Activated naive CD4-positive, alpha-beta T cell treated with anti-CD3 and anti-CD28 coated beads for 36 hours (primary cell): ENCODE measurements at regions of chr5 and their contacts with region 1.

Region 1: DNA sequence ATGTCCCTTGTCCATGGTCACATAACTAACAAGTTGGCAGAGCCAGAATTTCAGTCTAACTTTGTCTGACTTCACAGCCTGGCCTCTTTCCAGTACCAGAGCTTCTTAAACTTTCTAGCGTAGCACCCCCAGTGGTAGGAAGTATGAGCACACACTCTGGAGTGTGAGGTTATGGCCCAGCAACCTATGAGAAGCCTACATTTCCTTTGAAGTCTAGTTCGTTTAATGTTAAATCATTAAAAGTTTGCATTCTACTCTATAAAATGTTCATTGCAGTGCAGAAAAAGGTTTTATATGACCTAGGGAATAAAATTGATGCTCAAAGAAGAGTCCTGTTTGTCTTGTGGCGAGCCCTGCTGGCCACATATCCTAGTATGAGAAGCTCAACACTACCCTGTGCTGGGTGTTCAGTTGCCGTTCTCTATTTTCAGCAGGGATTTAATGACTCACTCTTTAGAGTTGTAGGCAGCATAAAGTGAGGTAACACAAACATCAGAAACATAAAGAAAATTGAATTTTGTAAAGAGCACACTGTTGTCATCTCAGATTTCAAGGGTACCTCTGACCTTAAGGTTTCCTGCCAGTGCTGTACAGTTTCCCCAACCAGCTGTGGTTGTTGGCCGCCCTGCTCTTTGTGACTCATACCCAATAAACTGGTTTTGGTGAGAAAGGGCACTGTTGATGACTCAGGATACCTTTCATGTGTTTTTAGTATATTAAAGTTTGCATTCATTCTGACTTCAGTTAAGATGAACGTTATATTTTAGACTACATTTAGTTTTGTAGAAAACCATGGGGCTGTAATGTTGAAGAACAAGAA is 14.3 kb downstream of the MCCC2 start:
- DNase-seq: peak; percentile 88
- H3K4me3 Mint-ChIP-seq: no peak overlapping the region
- H3K27ac Mint-ChIP-seq: peak overlapping the region; percentile 86
- H3K4me1 Mint-ChIP-seq: peaks cover 31% of the 10 kb centered on the region
- H3K27me3 Mint-ChIP-seq: no peaks in the 10 kb centered on the region

Region 2: GRCh38 chr5:71475788-71476384 is 125.5 kb before region 1 on chr5:
- CTCF ChIA-PET with region 1: no interaction called
- intact Hi-C with region 1: loop called (anchors 1 kb)
- DNase-seq: no peak
- H3K4me3 Mint-ChIP-seq: no peak overlapping the region
- H3K27ac Mint-ChIP-seq: no peak overlapping the region
- H3K4me1 Mint-ChIP-seq: peaks cover 3% of the 10 kb centered on the region
- H3K27me3 Mint-ChIP-seq: no peaks in the 10 kb centered on the region

Region 3: GRCh38 chr5:71586941-71587765 is 14.3 kb before region 1 on chr5 and contains the start of gene MCCC2:
- CTCF ChIA-PET with region 1: interaction called, 22 read pairs
- intact Hi-C with region 1: loop called (anchors 1 kb)
- DNase-seq: peak; percentile 98
- H3K4me3 Mint-ChIP-seq: peak within 1 kb of the TSS; percentile 94
- H3K27ac Mint-ChIP-seq: peak within 1 kb of the TSS; percentile 94
- H3K4me1 Mint-ChIP-seq: peaks cover 31% of the 10 kb centered on the region
- H3K27me3 Mint-ChIP-seq: no peaks in the 10 kb centered on the region
- total RNA-seq, gene MCCC2: 49.3 to 51.6 TPM

Region 4: DNA sequence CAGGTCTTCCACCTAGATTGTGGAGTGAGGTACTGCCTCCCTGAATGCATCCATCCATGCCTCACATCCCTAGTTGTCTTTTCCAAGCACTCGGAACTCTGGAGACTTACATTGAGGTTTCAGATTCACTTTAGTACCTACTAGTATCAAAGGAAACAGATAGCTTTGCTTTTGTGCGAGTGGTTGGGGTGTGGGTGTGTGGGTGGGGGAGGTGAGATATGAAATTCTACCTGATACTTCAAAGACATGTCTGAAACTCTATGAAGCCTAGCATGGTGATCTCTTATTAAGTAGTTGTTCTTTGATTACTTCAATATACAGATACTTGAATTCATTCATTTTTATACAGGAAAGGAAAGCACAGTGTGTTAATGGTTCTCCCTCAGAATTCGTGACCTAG is 50.1 kb after region 1 on chr5:
- CTCF ChIA-PET with region 1: no interaction called
- intact Hi-C with region 1: loop called (anchors 1 kb)
- DNase-seq: peak; percentile 70
- H3K4me3 Mint-ChIP-seq: no peak overlapping the region
- H3K27ac Mint-ChIP-seq: no peak overlapping the region
- H3K4me1 Mint-ChIP-seq: peaks cover 14% of the 10 kb centered on the region
- H3K27me3 Mint-ChIP-seq: no peaks in the 10 kb centered on the region

Region 5: DNA sequence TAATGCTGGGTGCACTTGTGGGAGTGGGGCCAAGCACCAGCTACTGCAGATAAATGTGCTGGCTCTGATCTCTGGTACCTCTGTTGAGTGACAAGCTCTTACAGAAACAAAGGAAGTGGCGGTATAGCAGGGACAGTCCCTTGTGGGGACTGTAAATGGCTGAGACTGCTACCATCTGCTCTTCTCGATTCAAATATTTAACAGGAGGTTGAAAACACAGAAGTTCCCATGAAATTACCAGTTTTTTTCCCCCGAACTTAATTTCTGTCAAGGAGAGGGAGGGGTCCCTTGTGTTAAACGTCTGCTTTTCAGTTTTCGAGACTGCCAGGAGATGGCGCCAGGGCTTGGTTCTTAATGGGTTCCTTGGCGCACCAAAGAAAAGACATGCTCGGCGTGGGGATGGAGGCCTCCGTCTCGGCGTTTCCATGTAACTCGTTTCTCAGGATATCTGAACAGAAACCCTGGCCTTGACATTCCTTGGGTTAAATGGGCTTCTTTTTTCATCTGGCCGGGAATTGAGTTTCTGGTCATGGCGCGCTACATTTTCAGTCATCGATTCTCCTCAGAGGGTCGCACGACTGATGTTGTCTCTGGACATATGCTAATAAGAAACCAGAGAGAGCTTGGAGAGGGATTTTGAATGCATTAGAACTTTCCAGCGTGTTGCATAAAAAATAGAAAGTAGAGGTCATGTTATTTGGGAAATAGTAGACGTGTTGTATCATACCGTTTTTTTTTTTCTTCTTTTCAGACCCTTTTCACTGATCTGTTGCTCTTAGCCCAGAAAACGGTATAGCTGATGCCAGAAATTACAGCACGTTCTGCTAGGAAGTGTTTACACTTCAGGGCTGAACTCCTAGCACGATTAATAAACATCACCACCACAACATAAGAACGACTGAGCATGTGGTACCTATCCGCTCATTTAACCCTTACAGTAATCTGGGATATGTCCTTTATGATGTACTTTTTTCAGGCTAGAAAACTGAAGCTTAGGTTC is 181.6 kb after region 1 on chr5:
- CTCF ChIA-PET with region 1: no interaction called
- intact Hi-C with region 1: loop called (anchors 2 kb)
- DNase-seq: peak; percentile 90
- H3K4me3 Mint-ChIP-seq: peak overlapping the region; percentile 37
- H3K27ac Mint-ChIP-seq: peak overlapping the region; percentile 52
- H3K4me1 Mint-ChIP-seq: peaks cover 25% of the 10 kb centered on the region
- H3K27me3 Mint-ChIP-seq: peaks cover 9% of the 10 kb centered on the region

Region 6: GRCh38 chr5:72307968-72308852 is 706.8 kb after region 1 on chr5:
- CTCF ChIA-PET with region 1: no interaction called
- intact Hi-C with region 1: loop called (anchors 1 kb)
- DNase-seq: peak; percentile 94
- H3K4me3 Mint-ChIP-seq: peak overlapping the region; percentile 85
- H3K27ac Mint-ChIP-seq: peak overlapping the region; percentile 92
- H3K4me1 Mint-ChIP-seq: peaks cover 32% of the 10 kb centered on the region
- H3K27me3 Mint-ChIP-seq: no peaks in the 10 kb centered on the region